SK-N-SH (cell line): ENCODE measurements at regions of chr12 and their contacts with region 1.

Region 1: DNA sequence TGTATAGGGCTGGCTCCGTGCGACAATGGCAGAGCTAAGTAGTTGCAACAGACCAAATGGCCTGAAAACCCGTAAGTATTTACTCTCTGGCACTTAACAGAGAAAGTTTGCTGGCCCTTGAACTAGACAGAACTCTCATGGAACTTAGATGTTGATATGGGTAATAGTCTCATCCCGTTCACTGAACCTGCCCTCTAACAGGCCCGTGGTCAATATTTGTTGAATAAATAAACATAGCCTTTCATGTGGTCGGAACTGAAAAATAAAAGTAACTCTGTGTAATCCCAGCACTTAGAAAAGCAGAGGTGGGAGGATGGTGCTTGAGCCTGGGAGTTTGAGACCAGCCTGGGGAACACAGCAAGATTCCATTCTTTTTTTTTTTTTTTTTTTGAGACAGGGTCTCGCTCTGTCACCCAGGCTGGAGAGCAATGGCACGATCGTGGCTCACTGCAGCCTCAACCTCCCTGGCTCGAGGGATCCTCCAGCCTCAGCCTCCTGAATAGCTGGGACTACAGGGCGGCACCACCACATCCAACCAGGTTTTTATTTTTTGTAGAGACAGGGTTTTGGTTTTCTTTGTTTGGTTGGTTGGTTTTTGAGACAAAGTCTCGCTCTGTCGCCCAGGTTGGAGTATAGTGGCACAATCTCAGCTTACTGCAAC is 29.7 kb downstream of the KDM2B start:
- DNase-seq: no peak
- H3K4me3 ChIP-seq: no peak overlapping the region
- H3K27ac ChIP-seq: no peak overlapping the region
- H3K4me1 ChIP-seq: no peaks in the 10 kb centered on the region
- H3K27me3 ChIP-seq: no peaks in the 10 kb centered on the region
- CTCF ChIP-seq: no peak
- EP300 ChIP-seq: no peak
- RAD21 ChIP-seq: no peak

Region 2: DNA sequence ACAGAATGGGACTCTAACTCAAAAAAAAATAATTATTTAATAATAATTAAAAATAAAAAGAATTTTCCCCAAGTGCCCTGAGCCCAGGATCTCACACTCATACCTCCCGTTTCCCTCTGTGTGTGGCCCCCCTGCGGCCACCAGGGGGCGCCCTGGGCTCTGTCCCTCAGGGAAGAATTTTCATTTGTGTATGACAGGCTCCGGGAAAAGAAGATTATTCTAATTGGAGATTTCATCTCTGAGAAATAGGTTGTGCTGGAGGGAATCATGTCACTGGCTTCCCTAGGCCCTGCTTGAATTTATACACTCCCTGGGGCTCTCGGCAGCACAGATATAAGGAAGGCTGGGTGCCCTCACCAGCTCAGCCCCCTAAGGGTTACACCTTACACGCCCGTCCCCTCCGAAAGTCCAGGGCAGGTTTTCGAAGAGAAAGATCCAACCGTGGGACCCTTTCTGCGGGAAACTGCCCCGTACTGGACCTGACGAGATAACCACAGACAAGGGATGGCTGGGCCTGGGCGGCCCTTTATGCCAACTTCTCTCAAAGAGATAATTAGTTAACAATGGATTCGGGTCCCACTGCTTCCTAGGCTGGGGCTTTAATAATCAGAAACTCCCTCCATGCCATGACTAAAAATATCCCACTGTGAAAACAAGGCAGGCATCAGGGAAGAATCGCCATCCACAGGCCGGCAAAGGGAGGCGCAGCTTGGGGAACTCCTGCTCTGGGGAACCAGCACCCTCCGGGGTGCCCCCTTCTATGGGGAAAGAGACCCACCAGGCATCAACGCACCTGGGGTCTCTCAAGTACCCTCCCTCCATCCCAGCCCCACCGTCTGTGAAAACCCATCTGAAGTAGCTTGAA is 50.9 kb before region 1 on chr12:
- CTCF ChIA-PET with region 1: interaction called, 21 read pairs
- POLR2A ChIA-PET with region 1: no interaction called
- DNase-seq: peak; percentile 90
- H3K4me3 ChIP-seq: peak overlapping the region in 1 of 2 experiments; percentile 54; a peak in 1 of 4 replicates
- H3K27ac ChIP-seq: peak overlapping the region; percentile 2 to 45; a peak in 1 of 4 replicates
- H3K4me1 ChIP-seq: peaks cover 4 to 5% of the 10 kb centered on the region in 2 experiments; a peak in 2 of 4 replicates
- H3K27me3 ChIP-seq: no peaks in the 10 kb centered on the region
- CTCF ChIP-seq: peak; percentile 93
- EP300 ChIP-seq: no peak
- RAD21 ChIP-seq: peak; percentile 70

Region 3: GRCh38 chr12:121568971-121569751 is 18.1 kb after region 1 on chr12:
- CTCF ChIA-PET with region 1: interaction called, 30 read pairs
- POLR2A ChIA-PET with region 1: no interaction called
- DNase-seq: no peak
- H3K4me3 ChIP-seq: no peak overlapping the region
- H3K27ac ChIP-seq: no peak overlapping the region
- H3K4me1 ChIP-seq: no peaks in the 10 kb centered on the region
- H3K27me3 ChIP-seq: no peaks in the 10 kb centered on the region
- CTCF ChIP-seq: no peak
- EP300 ChIP-seq: no peak
- RAD21 ChIP-seq: no peak

Region 4: GRCh38 chr12:121610239-121611149 is 59.4 kb after region 1 on chr12:
- CTCF ChIA-PET with region 1: interaction called, 15 read pairs
- POLR2A ChIA-PET with region 1: no interaction called
- DNase-seq: no peak
- H3K4me3 ChIP-seq: no peak overlapping the region
- H3K27ac ChIP-seq: no peak overlapping the region
- H3K4me1 ChIP-seq: peaks cover 0 to 7% of the 10 kb centered on the region in 2 experiments; a peak in 1 of 4 replicates
- H3K27me3 ChIP-seq: no peaks in the 10 kb centered on the region
- CTCF ChIP-seq: no peak
- EP300 ChIP-seq: no peak
- RAD21 ChIP-seq: no peak

Region 5: DNA sequence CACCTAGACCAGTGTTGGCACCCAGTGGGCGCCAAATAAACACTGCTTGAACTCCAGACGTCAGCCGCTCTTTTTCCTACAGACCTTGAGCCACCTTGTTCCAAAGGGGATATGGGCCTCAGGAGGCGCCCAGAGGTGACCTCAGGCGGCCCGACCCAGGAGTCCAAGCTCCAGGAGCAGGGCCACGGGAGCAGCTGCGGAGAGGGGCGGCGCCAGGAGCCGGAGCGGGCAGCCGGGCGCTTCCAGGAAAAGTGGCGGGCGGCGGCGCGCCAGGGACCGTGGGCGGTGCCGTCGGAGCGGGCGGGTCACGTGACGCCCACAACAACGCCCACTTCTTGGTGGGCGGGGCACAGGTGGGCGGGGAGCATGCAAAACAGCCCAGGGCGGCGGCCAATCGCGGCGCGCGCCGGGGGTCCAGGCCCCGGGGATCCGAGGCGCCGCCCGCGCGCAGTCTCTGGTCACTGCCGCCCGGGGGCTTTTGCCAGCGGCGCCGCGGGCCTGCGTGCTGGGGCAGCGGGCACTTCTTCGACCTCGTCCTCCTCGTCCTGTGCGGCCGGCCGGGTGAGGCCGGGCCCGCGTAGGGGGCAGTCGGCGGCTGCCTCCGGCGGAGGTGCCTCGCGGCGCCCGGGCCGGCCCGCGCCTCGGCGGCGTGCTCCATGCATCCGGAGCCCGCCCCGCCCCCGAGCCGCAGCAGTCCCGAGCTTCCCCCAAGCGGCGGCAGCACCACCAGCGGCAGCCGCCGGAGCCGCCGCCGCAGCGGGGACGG is 75.2 kb after region 1 on chr12 and contains the start of gene ORAI1:
- CTCF ChIA-PET with region 1: interaction called, 86 read pairs
- POLR2A ChIA-PET with region 1: no interaction called
- DNase-seq: peak; percentile 99
- H3K4me3 ChIP-seq: peak within 1 kb of the TSS; percentile 63 to 82
- H3K27ac ChIP-seq: peak within 1 kb of the TSS; percentile 77 to 84
- H3K4me1 ChIP-seq: peaks cover 16 to 23% of the 10 kb centered on the region in 2 experiments; a peak in 3 of 4 replicates
- H3K27me3 ChIP-seq: no peaks in the 10 kb centered on the region
- CTCF ChIP-seq: no peak; the same call in 1 of the 2 replicates
- EP300 ChIP-seq: no peak
- RAD21 ChIP-seq: no peak
- polyA plus RNA-seq, gene ORAI1: 13.2 and 16.6 TPM in 2 replicates

Region 6: GRCh38 chr12:121668750-121669520 is 117.8 kb after region 1 on chr12:
- CTCF ChIA-PET with region 1: interaction called, 204 read pairs
- POLR2A ChIA-PET with region 1: interaction called, 3 read pairs
- DNase-seq: peak; percentile 84
- H3K4me3 ChIP-seq: no peak overlapping the region
- H3K27ac ChIP-seq: no peak overlapping the region
- H3K4me1 ChIP-seq: peaks cover 0 to 6% of the 10 kb centered on the region in 2 experiments; a peak in 1 of 4 replicates
- H3K27me3 ChIP-seq: no peaks in the 10 kb centered on the region
- CTCF ChIP-seq: peak; percentile 79
- EP300 ChIP-seq: no peak
- RAD21 ChIP-seq: peak; percentile 72

Region 7: DNA sequence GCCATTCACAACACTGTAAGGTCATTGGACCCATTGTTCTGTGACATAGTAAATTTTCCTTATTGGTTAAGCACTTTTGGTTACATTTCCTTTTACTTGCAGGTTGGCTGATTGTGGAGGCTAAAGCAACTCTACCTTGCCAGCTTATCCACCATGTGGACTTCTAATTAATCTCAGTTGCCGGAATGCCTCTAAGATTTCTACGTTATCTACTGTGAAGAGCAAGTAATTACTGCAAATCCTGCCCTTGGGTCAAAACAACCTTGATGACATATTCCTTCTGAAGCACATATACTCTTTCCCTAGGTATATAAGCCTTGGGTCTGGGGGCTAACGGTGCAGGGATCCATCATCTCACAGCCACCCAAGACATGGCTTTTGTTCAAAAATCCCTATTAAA is 137.9 kb after region 1 on chr12:
- CTCF ChIA-PET with region 1: interaction called, 50 read pairs
- POLR2A ChIA-PET with region 1: interaction called, 9 read pairs
- DNase-seq: no peak
- H3K4me3 ChIP-seq: no peak overlapping the region
- H3K27ac ChIP-seq: no peak overlapping the region
- H3K4me1 ChIP-seq: no peaks in the 10 kb centered on the region
- H3K27me3 ChIP-seq: no peaks in the 10 kb centered on the region
- CTCF ChIP-seq: no peak
- EP300 ChIP-seq: no peak
- RAD21 ChIP-seq: no peak